ENCODE measurements at regions of chr15 and their contacts with region 1.

Region 1: DNA sequence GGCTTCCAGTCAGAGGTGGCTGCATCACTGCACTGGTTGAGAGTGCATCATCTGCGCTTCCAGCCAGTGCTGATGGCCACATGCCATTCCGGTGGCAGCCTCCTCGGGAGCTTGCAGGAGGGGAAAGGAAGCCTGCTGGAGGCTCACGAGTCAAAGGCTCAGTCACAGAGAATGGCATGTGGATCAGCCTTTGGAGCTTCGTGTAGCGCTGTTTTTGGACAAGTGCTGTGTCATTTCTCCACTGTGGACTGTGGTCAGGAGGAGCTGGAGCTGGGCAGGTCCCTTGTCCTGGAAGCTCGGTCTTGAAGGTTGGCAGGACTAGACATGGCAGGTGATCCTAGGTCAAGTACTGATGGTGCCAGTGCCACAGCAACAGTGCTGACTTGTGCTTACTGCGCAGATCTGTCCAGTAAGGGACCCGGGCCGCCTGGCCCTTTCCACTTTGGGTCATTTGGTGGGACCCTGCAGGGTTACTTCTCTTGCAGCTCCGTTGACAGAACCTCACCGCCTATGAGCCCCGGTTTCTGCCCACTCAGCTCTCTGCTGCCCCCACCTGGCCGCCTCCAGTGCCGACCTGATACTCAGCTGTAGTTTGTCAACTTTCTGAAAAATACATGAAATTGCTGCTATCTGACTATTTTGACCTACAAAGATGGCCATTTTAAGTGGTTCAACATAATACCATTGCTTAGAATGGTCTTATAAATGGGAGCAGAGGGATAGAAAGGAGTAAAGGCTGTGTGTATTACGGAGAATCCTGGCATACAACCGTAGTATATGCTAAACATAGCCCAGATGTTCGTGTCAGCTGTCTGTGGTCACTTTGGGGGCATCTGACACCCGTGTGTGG is 27.6 kb upstream of the TRPM1 start:
- DNase-seq: peak; percentile 38 to 54
- ATAC-seq: peak; percentile 92 to 94
- H3K4me3 ChIP-seq: peak overlapping the region in 3 of 4 donors; percentile 2 to 17 (median 3)
- H3K27ac ChIP-seq: no peak overlapping the region
- H3K4me1 ChIP-seq: peaks cover 8 to 9% of the 10 kb centered on the region in 2 donors
- H3K27me3 ChIP-seq: no peaks in the 10 kb centered on the region
- CTCF ChIP-seq: peak; percentile 79 to 98 (median 86)
- POLR2A ChIP-seq: no peak

Region 2: GRCh38 chr15:30670056-30670455 is 459.1 kb before region 1 on chr15:
- in situ Hi-C with region 1: loop called in 3 of 4 experiments (anchors 10 to 25 kb)
- intact Hi-C with region 1: no loop called
- DNase-seq: no peak
- ATAC-seq: no peak
- H3K4me3 ChIP-seq: no peak overlapping the region
- H3K27ac ChIP-seq: no peak overlapping the region
- H3K4me1 ChIP-seq: no peaks in the 10 kb centered on the region
- H3K27me3 ChIP-seq: no peaks in the 10 kb centered on the region
- CTCF ChIP-seq: no peak
- POLR2A ChIP-seq: no peak

Region 3: DNA sequence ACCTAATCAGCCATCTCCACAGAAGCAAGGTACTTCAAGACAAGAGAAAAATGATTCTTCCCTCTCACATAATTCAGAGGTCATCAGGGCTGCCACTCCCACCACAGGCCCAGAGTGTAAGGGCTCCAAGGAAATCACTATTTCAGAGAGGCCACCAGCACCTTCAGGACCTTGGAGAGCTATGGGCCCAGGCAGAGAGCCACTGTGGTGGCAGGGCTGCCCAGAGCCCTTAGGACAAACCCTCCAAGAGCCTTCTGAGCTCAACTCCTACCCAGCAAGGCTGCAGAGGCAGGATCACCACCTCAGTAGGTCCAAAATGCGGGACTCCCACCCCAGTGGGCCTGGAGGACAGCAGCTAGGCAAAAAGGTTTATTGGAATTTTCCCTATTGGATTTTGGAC is 243.3 kb before region 1 on chr15:
- in situ Hi-C with region 1: loop called in 3 of 4 experiments (anchors 25 kb)
- intact Hi-C with region 1: no loop called
- DNase-seq: no peak
- ATAC-seq: no peak
- H3K4me3 ChIP-seq: no peak overlapping the region
- H3K27ac ChIP-seq: no peak overlapping the region
- H3K4me1 ChIP-seq: no peaks in the 10 kb centered on the region
- H3K27me3 ChIP-seq: no peaks in the 10 kb centered on the region
- CTCF ChIP-seq: no peak
- POLR2A ChIP-seq: no peak

Region 4: DNA sequence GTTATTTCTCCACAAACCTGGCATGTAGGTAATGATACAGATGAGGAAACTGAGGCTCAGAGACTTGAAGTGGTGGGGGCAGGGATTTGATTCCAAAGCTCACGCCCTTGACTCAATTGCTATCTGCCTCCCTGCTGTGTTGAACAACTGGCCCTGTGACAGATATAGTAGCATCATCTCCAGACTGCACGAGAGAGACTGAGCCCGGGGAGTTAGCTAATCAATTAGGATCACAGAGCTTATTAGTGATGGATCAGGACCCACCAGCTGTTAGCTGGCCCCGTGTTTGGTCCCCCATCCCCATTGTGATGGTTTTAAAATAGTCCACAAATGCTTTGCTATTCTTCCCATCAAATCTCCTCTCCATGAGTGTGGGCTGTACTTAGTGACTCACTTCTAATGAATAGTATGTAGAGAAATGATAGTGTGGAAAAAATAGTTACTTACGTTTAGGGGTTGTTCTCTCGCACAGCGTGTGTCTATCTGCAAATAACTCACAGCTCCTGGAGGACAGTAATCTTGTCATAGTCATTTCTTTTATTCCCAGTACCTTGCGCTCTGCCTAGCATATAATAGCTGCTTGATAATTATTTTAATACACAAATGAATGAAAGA is 123.1 kb after region 1 on chr15:
- in situ Hi-C with region 1: no loop called
- intact Hi-C with region 1: no loop called
- DNase-seq: no peak
- ATAC-seq: no peak
- H3K4me3 ChIP-seq: no peak overlapping the region
- H3K27ac ChIP-seq: no peak overlapping the region
- H3K4me1 ChIP-seq: no peaks in the 10 kb centered on the region
- H3K27me3 ChIP-seq: no peaks in the 10 kb centered on the region
- CTCF ChIP-seq: no peak
- POLR2A ChIP-seq: no peak

Measured in gastrocnemius medialis (tissue), 4 donors.